ENCODE measurements at regions of chr22 and their contacts with region 1.

Region 1: GRCh38 chr22:19629720-19630419 is 84.4 kb upstream of the SEPTIN5 start:
- DNase-seq: peak; percentile 12
- H3K4me3 ChIP-seq: no peak overlapping the region
- CTCF ChIP-seq: peak; percentile 92

Region 2: GRCh38 chr22:19292458-19293230 is 337.2 kb before region 1 on chr22:
- CTCF ChIA-PET with region 1: interaction called, 66 read pairs
- POLR2A ChIA-PET with region 1: interaction called, 3 read pairs
- DNase-seq: no peak
- H3K4me3 ChIP-seq: peak overlapping the region; percentile 81
- CTCF ChIP-seq: no peak

Region 3: GRCh38 chr22:19488884-19489843 is 140.7 kb before region 1 on chr22:
- CTCF ChIA-PET with region 1: interaction called, 68 read pairs
- POLR2A ChIA-PET with region 1: no interaction called
- DNase-seq: no peak
- H3K4me3 ChIP-seq: no peak overlapping the region
- CTCF ChIP-seq: no peak

Region 4: DNA sequence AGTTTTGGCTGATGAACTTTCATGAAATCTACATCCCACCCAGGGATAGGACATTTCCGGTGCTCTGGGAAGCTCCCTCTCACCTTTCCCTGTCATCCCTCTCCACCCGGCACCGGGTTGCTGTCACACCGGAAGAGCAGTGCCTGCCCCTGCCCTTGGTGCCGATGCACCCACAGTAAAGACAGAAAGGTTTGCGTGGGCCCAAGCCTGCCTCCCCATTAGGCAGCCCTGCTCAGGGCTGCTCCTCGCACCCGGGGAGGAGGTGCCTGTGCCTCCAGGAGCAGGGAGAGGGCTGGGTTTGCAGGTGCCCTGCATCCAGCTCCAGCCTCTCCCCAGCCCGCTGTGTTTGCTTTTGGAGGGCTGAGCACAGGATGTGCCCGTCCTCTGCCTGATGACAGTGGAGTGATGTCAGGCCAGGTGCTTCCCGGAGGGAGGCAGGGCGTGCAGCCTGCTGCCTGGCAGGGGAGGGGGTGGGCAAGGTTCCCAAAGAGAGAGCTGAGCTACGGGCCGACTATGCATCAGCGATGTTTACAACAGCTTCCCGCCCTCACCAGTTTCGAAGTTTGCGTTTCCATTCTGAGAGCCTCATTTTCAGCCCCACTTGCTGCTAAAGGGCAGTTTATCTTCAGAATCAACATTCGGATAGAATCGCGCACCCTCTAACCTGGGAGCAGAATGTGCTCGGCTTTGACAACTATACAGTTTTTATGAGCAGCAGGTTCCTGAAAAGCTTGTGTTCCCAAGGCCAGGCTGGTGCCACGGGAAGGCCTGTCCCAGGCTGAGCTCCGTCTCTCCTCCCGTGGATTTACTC is 22.5 kb before region 1 on chr22:
- CTCF ChIA-PET with region 1: interaction called, 13 read pairs
- POLR2A ChIA-PET with region 1: no interaction called
- DNase-seq: no peak
- H3K4me3 ChIP-seq: no peak overlapping the region
- CTCF ChIP-seq: no peak

Region 5: DNA sequence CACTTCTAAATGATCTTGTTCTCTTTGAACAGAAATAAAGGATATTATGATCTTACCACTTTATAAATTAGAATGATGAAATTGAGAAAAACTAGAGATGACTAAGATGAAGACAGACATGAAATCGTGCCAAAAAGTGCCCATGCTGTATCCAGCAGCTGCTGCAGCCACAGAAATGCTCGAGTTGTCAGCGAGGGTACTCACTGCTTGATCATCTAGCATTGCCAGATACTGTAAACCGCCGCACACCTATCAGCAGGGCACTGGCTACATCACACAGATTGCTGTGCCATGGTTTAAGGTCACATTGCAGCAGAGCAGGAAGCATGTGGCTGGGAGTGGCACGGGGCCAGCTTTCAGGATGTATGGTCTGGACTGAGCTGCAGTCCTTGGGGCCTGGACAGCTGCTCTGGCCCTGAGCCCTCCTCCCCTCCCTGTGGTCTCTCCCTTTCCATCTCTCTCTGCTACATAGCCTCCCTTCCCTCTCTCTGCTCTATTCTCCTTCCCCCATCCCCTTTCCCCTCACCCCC is 33.5 kb after region 1 on chr22:
- CTCF ChIA-PET with region 1: interaction called, 20 read pairs
- POLR2A ChIA-PET with region 1: no interaction called
- DNase-seq: peak; percentile 51
- H3K4me3 ChIP-seq: no peak overlapping the region
- CTCF ChIP-seq: no peak

Measured in AG04449 (cell line).